B cell (primary cell): ENCODE measurements at regions of chr1 and their contacts with region 1.

Region 1: DNA sequence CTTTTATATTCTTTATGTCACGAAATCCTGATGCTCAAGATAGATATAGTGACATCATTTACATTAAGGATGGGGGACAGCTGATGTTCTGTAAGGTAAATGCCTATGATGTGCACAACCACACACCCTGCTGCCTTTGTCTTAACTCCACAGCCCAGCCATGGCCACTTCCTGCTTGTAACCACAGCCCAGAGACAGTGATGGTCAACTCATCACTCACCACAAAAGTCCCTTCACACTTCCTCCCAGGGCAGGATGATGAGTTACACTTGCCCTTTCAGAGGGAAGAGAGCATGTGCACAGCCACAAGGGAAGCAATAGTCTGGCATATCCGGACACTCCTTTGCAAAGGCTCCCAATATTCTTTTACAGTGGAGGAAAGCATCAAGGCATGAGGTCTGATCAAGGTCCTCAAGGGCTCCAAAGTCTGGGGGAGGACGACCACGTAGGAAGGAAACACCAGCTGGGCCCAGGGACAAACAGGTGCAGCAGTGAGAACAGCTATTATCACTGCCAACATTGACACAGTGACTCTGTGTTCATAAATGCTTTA is 53.8 kb downstream of the PLPP3 start:
- DNase-seq: peak; percentile 33
- ATAC-seq: peak; percentile 46
- H3K4me3 ChIP-seq: no peak overlapping the region
- H3K4me3 Mint-ChIP-seq: peak overlapping the region; percentile 46
- H3K27ac ChIP-seq: peak overlapping the region in 1 of 2 donors; percentile 17
- H3K27ac Mint-ChIP-seq: peak overlapping the region; percentile 70
- H3K4me1 ChIP-seq: peaks cover 44 to 48% of the 10 kb centered on the region in 2 donors
- H3K4me1 Mint-ChIP-seq: peaks cover 63% of the 10 kb centered on the region
- H3K27me3 ChIP-seq: no peaks in the 10 kb centered on the region
- H3K27me3 Mint-ChIP-seq: no peaks in the 10 kb centered on the region
- CTCF ChIP-seq: no peak

Region 2: DNA sequence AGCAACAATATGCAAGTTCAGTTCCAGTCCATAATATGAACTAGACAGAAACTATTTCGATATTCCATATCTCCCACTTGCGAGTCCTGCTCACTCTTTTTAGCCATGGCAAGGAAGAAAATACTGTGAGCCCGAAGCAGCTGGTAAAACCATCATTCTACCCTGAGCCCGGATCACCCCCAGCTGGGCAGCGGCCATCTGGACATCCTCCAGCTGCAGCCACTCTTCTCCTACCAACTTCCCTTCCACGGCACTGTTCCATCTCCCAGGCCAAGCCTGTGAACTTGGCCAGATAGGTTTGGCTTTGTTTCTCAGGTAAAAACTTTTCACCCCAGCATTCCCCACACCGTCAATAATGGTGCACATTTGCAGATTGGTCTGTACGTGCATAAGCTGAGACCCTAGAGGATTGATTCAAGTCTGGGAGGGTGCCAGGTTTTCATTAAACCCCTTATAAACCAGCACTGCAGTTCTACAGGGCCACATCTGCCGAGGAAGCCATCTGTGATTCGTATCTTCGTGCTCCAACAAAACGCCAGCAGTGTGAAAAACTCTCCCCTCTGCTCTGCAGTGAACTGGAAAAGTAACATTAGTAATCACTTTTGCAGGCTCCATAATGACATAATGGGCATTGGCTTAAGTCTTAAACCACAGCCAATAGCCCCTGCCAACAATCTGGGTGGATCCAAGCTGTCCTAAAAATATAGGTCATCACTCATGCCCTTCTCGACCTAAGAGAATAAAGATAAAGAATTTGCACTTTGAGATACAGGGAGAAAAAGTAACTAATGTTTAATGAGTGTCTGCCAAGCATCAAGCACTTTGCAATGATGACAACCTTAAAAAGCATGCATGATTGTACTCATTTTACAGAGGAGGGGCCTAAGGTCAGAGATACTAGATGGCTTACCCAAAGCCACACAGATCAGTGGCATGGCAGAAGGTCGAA is 151.3 kb before region 1 on chr1:
- CTCF ChIA-PET with region 1: no interaction called
- POLR2A ChIA-PET with region 1: no interaction called
- intact Hi-C with region 1: no loop called
- DNase-seq: no peak
- ATAC-seq: no peak
- H3K4me3 ChIP-seq: no peak overlapping the region
- H3K4me3 Mint-ChIP-seq: no peak overlapping the region
- H3K27ac ChIP-seq: no peak overlapping the region
- H3K27ac Mint-ChIP-seq: no peak overlapping the region
- H3K4me1 ChIP-seq: no peaks in the 10 kb centered on the region
- H3K4me1 Mint-ChIP-seq: no peaks in the 10 kb centered on the region
- H3K27me3 ChIP-seq: peaks cover 0 to 10% (median 4%) of the 10 kb centered on the region in 4 experiments
- H3K27me3 Mint-ChIP-seq: peaks cover 23% of the 10 kb centered on the region
- CTCF ChIP-seq: no peak

Region 3: DNA sequence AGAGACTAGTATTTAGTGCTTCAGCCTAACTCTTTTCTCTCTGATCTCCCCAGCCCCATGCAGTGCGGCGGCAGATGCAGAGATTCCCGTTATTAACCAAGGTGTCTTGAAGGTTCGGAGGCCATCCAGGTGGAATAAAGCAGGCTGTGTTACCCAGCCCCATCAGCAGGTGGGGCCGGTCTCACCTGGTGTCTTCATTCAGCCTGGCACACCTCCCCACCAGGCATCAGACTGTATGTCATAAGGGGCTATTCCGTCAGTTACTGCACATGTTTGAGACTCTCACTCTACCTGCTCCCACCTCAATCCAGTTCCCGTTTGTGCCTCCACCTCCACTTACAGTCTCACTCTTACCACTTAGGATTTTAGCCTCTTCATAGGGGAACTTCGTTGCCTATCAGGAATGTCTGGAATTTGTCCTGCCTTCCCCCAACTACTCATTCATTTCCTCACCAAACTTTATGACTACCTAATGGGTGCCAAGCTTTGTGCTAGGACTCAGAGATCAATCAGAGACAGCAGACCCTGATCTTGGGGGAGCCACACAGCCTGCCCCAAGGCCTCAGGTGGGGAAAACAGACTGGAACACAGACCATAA is 116.4 kb before region 1 on chr1:
- CTCF ChIA-PET with region 1: interaction called, 5 read pairs
- POLR2A ChIA-PET with region 1: no interaction called
- intact Hi-C with region 1: loop called (anchors 5 kb)
- DNase-seq: peak; percentile 61
- ATAC-seq: no peak
- H3K4me3 ChIP-seq: no peak overlapping the region
- H3K4me3 Mint-ChIP-seq: no peak overlapping the region
- H3K27ac ChIP-seq: no peak overlapping the region
- H3K27ac Mint-ChIP-seq: no peak overlapping the region
- H3K4me1 ChIP-seq: peaks cover 11 to 16% of the 10 kb centered on the region in 2 donors
- H3K4me1 Mint-ChIP-seq: peaks cover 27% of the 10 kb centered on the region
- H3K27me3 ChIP-seq: no peaks in the 10 kb centered on the region
- H3K27me3 Mint-ChIP-seq: no peaks in the 10 kb centered on the region
- CTCF ChIP-seq: peak; percentile 67

Region 4: DNA sequence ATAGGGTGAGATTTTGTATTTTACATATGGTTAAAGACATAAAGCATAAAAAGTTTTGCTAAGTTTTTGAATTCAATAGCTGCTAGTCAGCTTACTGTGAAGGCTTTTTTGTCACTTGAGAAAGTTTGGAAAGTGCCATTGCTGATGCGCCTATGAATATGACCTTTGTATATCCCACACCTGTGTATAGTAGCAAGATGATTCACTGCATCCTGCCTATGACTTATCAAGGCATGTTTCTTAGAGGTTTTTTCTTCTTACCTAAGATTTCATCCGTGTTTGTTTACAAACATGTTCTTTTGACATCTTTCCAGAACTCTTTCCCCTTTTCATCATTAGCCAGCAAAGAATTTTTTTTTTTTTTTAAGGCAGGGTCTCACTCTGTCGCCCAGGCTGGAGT is 171.1 kb after region 1 on chr1:
- CTCF ChIA-PET with region 1: no interaction called
- POLR2A ChIA-PET with region 1: no interaction called
- intact Hi-C with region 1: no loop called
- DNase-seq: no peak
- ATAC-seq: no peak
- H3K4me3 ChIP-seq: no peak overlapping the region
- H3K4me3 Mint-ChIP-seq: no peak overlapping the region
- H3K27ac ChIP-seq: no peak overlapping the region
- H3K27ac Mint-ChIP-seq: no peak overlapping the region
- H3K4me1 ChIP-seq: no peaks in the 10 kb centered on the region
- H3K4me1 Mint-ChIP-seq: no peaks in the 10 kb centered on the region
- H3K27me3 ChIP-seq: no peaks in the 10 kb centered on the region
- H3K27me3 Mint-ChIP-seq: peaks cover 18% of the 10 kb centered on the region
- CTCF ChIP-seq: no peak

Region 5: DNA sequence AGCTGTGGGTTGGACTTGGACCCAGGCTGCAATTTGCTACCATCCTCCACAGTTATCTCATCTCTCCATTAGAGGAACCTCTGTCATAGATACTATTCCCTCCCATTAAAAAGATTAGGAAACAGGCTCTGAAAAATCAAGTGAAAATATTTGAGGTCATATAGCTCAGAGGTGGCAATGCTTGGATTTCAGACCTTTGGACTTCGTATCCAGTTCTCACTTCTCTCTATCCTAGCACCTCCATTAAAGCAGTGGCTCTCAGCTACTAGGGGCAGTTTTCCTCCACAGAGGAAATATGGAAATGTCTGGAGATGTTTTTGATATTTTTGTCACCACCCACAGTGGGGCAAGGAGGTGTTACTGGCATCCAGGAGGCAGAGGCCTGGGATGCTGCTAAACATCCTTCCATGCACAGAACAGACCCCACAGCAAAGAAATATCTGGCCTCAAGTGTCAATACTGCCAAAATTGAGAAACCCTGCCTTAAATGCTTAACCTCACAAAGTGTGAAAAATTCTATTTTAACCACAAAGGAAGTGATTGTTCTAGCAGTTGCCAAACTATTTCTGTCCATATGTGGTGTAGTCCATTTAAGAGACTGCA is 383.2 kb after region 1 on chr1:
- CTCF ChIA-PET with region 1: no interaction called
- POLR2A ChIA-PET with region 1: no interaction called
- intact Hi-C with region 1: no loop called
- DNase-seq: no peak
- ATAC-seq: no peak
- H3K4me3 ChIP-seq: no peak overlapping the region
- H3K4me3 Mint-ChIP-seq: no peak overlapping the region
- H3K27ac ChIP-seq: no peak overlapping the region
- H3K27ac Mint-ChIP-seq: no peak overlapping the region
- H3K4me1 ChIP-seq: no peaks in the 10 kb centered on the region
- H3K4me1 Mint-ChIP-seq: no peaks in the 10 kb centered on the region
- H3K27me3 ChIP-seq: no peaks in the 10 kb centered on the region
- H3K27me3 Mint-ChIP-seq: peaks cover 3% of the 10 kb centered on the region
- CTCF ChIP-seq: no peak